ENCODE measurements at regions of chr12 and their contacts with region 1.

Region 1: DNA sequence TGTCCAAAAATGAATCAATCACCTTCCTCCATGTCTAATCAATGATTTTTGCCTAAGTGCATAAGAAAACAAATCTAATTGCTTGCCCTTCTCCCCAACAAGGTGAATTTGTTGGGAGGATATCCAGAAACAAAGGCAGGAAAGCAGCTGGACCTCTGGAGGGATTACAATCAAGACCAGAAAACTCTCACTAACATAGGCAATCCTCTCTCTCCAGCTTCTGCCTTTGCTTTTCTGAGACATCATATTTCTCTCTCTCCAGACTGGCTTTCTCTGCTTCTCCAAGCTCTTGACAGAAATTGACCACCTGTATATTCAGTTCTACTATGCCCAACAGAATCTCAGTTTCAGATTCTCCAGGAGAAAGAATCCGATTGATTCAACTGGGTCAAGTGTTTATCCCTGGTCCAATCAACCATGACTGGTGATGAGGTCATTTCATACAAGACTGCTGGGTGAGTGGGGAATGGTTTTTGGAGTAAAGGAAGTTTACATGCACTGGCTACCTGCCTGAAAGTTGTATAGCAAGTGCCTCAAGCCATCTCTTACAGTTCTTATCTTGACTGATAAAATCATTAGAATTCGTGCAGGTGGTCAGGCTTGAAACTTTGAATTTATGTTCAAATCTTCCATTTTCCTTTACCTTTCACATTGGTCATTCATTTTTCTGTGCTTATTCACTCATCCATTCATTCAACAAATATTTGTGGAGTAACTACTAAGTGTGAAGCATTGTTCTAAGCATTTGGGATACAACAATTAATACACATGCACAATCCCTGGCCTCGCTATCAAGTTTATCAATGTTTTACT is 22.2 kb upstream of the CFAP54 start:
- DNase-seq: no peak
- ATAC-seq: no peak
- H3K4me3 ChIP-seq: no peak overlapping the region
- H3K4me3 Mint-ChIP-seq: no peak overlapping the region
- H3K27ac ChIP-seq: no peak overlapping the region
- H3K27ac Mint-ChIP-seq: no peak overlapping the region
- H3K4me1 ChIP-seq: no peaks in the 10 kb centered on the region
- H3K4me1 Mint-ChIP-seq: no peaks in the 10 kb centered on the region
- H3K27me3 ChIP-seq: no peaks in the 10 kb centered on the region
- H3K27me3 Mint-ChIP-seq: no peaks in the 10 kb centered on the region
- CTCF ChIP-seq: no peak

Region 2: GRCh38 chr12:96416033-96416801 is 50.9 kb before region 1 on chr12:
- CTCF ChIA-PET with region 1: no interaction called
- POLR2A ChIA-PET with region 1: no interaction called
- intact Hi-C with region 1: loop called in 1 of 2 experiments (anchors 5 kb)
- DNase-seq: peak in 2 of 14 experiments; percentile 42 to 54
- ATAC-seq: no peak
- H3K4me3 ChIP-seq: no peak overlapping the region
- H3K4me3 Mint-ChIP-seq: no peak overlapping the region
- H3K27ac ChIP-seq: no peak overlapping the region
- H3K27ac Mint-ChIP-seq: no peak overlapping the region
- H3K4me1 ChIP-seq: peaks cover 7% of the 10 kb centered on the region
- H3K4me1 Mint-ChIP-seq: peaks cover 22% of the 10 kb centered on the region
- H3K27me3 ChIP-seq: no peaks in the 10 kb centered on the region
- H3K27me3 Mint-ChIP-seq: no peaks in the 10 kb centered on the region
- CTCF ChIP-seq: no peak

Region 3: GRCh38 chr12:96434107-96434506 is 33.0 kb before region 1 on chr12:
- CTCF ChIA-PET with region 1: no interaction called
- POLR2A ChIA-PET with region 1: no interaction called
- intact Hi-C with region 1: no loop called
- DNase-seq: peak; percentile 37 to 95 (median 57)
- ATAC-seq: peak; percentile 98
- H3K4me3 ChIP-seq: peak overlapping the region; percentile 6
- H3K4me3 Mint-ChIP-seq: peak overlapping the region; percentile 52
- H3K27ac ChIP-seq: peak overlapping the region; percentile 50 to 73
- H3K27ac Mint-ChIP-seq: peak overlapping the region; percentile 75
- H3K4me1 ChIP-seq: peaks cover 40% of the 10 kb centered on the region
- H3K4me1 Mint-ChIP-seq: peaks cover 26% of the 10 kb centered on the region
- H3K27me3 ChIP-seq: no peaks in the 10 kb centered on the region
- H3K27me3 Mint-ChIP-seq: no peaks in the 10 kb centered on the region
- CTCF ChIP-seq: no peak

Region 4: DNA sequence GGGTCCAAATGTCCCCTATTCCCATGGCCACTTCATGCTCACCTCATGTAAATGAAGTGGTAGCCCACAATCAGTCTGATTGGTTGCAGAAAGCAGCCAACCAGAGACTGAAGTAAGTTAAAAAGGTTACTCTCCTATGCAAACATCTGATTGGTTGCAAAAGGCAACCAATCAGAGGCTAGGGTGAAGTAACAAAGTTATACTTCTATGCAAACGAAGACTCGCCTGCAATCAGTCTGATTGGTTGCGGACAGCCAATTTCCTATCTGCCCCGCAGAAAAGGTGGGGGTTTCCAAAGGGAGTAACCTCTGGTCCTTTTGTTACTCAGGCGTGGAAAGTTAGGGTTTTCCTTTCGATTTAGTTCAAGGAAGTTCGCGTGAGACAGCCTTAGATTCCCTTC is 231.8 kb after region 1 on chr12:
- CTCF ChIA-PET with region 1: no interaction called
- POLR2A ChIA-PET with region 1: no interaction called
- intact Hi-C with region 1: no loop called
- DNase-seq: no peak
- ATAC-seq: no peak
- H3K4me3 ChIP-seq: no peak overlapping the region
- H3K4me3 Mint-ChIP-seq: no peak overlapping the region
- H3K27ac ChIP-seq: no peak overlapping the region
- H3K27ac Mint-ChIP-seq: no peak overlapping the region
- H3K4me1 ChIP-seq: no peaks in the 10 kb centered on the region
- H3K4me1 Mint-ChIP-seq: no peaks in the 10 kb centered on the region
- H3K27me3 ChIP-seq: no peaks in the 10 kb centered on the region
- H3K27me3 Mint-ChIP-seq: peaks cover 21% of the 10 kb centered on the region
- CTCF ChIP-seq: no peak

Region 5: GRCh38 chr12:97513918-97514317 is 1046.8 kb after region 1 on chr12:
- CTCF ChIA-PET with region 1: no interaction called
- POLR2A ChIA-PET with region 1: no interaction called
- intact Hi-C with region 1: no loop called
- DNase-seq: no peak
- ATAC-seq: no peak
- H3K4me3 ChIP-seq: no peak overlapping the region
- H3K4me3 Mint-ChIP-seq: no peak overlapping the region
- H3K27ac ChIP-seq: no peak overlapping the region
- H3K27ac Mint-ChIP-seq: no peak overlapping the region
- H3K4me1 ChIP-seq: no peaks in the 10 kb centered on the region
- H3K4me1 Mint-ChIP-seq: no peaks in the 10 kb centered on the region
- H3K27me3 ChIP-seq: no peaks in the 10 kb centered on the region
- H3K27me3 Mint-ChIP-seq: no peaks in the 10 kb centered on the region
- CTCF ChIP-seq: no peak